CD4-positive, alpha-beta memory T cell (primary cell): ENCODE measurements at regions of chr15 and their contacts with region 1.

Region 1: DNA sequence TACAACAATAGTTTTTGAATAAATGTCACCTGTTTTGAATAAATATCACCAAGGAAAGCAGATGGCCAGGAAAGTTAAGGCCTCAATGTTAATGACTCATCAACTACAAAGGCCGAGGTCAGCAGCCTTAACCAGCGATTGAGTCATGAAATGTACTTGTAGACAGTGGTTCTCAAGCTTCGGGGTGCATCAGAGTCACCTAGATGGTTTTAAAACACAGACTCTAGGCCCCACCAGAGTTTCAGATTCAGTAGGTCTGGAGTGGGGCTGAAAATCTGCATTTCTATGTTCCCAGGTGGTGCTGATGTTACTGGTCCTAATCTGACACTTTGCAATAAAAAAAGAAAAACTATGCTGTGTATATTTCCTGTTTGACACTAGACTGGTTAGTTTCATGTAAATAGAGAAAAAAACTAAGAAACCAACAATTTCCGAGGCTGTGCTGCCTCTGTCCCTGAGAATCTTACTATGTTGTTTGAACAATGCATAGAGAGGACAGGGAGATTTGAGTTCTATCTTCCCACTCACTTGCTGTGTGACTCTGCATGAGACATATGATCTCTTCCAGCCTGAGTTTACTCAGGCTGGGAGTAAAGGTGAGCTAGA is 9.8 kb downstream of the RAB27A start:
- DNase-seq: peak; percentile 38 to 88 (median 45)
- H3K4me3 ChIP-seq: peak overlapping the region; percentile 14 to 25
- H3K4me3 Mint-ChIP-seq: peak overlapping the region; percentile 33 to 88 (median 70)
- H3K27ac ChIP-seq: peak overlapping the region; percentile 56
- H3K27ac Mint-ChIP-seq: peak overlapping the region; percentile 87 to 98 (median 95)
- H3K4me1 ChIP-seq: peaks cover 90% of the 10 kb centered on the region
- H3K4me1 Mint-ChIP-seq: peaks cover 72 to 99% (median 86%) of the 10 kb centered on the region in 4 donors
- H3K27me3 ChIP-seq: no peaks in the 10 kb centered on the region
- H3K27me3 Mint-ChIP-seq: no peaks in the 10 kb centered on the region

Region 2: GRCh38 chr15:55196458-55197361 is 83.1 kb before region 1 on chr15 and contains the start of gene RSL24D1:
- CTCF ChIA-PET with region 1: no interaction called
- POLR2A ChIA-PET with region 1: interaction called, 17 read pairs
- intact Hi-C with region 1: no loop called
- DNase-seq: peak; percentile 94 to 98 (median 97)
- H3K4me3 ChIP-seq: peak within 1 kb of the TSS; percentile 90 to 97
- H3K4me3 Mint-ChIP-seq: no peak within 1 kb of the TSS
- H3K27ac ChIP-seq: peak within 1 kb of the TSS; percentile 87
- H3K27ac Mint-ChIP-seq: no peak within 1 kb of the TSS
- H3K4me1 ChIP-seq: peaks cover 40% of the 10 kb centered on the region
- H3K4me1 Mint-ChIP-seq: peaks cover 10 to 17% (median 13%) of the 10 kb centered on the region in 4 donors
- H3K27me3 ChIP-seq: no peaks in the 10 kb centered on the region
- H3K27me3 Mint-ChIP-seq: no peaks in the 10 kb centered on the region
- total RNA-seq, gene RSL24D1: 103 to 107 TPM

Region 3: GRCh38 chr15:55318588-55319494 is 39.0 kb after region 1 on chr15 and contains the starts of genes PIGB and PIGBOS1:
- CTCF ChIA-PET with region 1: no interaction called
- POLR2A ChIA-PET with region 1: interaction called, 10 read pairs
- intact Hi-C with region 1: no loop called
- DNase-seq: peak; percentile 83 to 88 (median 87)
- H3K4me3 ChIP-seq: peak within 1 kb of the TSS; percentile 98 to 100
- H3K4me3 Mint-ChIP-seq: peak within 1 kb of the TSS; percentile 96 to 100 (median 98)
- H3K27ac ChIP-seq: peak within 1 kb of the TSS; percentile 93
- H3K27ac Mint-ChIP-seq: peak within 1 kb of the TSS; percentile 99 to 100 (median 100)
- H3K4me1 ChIP-seq: peaks cover 61% of the 10 kb centered on the region
- H3K4me1 Mint-ChIP-seq: peaks cover 44 to 82% (median 64%) of the 10 kb centered on the region in 4 donors
- H3K27me3 ChIP-seq: no peaks in the 10 kb centered on the region
- H3K27me3 Mint-ChIP-seq: no peaks in the 10 kb centered on the region
- total RNA-seq, gene PIGB: 26.4 to 28.6 TPM
- total RNA-seq, gene PIGBOS1: 14.1 to 20.3 TPM